A673 (cell line): ENCODE measurements at regions of chr16 and their contacts with region 1.

Region 1: GRCh38 chr16:69286941-69287713 is 24.0 kb upstream of the VPS4A start:
- DNase-seq: peak; percentile 80
- H3K4me3 ChIP-seq: no peak overlapping the region
- H3K27ac ChIP-seq: peak overlapping the region; percentile 42
- H3K4me1 ChIP-seq: peaks cover 5% of the 10 kb centered on the region
- H3K27me3 ChIP-seq: no peaks in the 10 kb centered on the region
- CTCF ChIP-seq: peak; percentile 76

Region 2: DNA sequence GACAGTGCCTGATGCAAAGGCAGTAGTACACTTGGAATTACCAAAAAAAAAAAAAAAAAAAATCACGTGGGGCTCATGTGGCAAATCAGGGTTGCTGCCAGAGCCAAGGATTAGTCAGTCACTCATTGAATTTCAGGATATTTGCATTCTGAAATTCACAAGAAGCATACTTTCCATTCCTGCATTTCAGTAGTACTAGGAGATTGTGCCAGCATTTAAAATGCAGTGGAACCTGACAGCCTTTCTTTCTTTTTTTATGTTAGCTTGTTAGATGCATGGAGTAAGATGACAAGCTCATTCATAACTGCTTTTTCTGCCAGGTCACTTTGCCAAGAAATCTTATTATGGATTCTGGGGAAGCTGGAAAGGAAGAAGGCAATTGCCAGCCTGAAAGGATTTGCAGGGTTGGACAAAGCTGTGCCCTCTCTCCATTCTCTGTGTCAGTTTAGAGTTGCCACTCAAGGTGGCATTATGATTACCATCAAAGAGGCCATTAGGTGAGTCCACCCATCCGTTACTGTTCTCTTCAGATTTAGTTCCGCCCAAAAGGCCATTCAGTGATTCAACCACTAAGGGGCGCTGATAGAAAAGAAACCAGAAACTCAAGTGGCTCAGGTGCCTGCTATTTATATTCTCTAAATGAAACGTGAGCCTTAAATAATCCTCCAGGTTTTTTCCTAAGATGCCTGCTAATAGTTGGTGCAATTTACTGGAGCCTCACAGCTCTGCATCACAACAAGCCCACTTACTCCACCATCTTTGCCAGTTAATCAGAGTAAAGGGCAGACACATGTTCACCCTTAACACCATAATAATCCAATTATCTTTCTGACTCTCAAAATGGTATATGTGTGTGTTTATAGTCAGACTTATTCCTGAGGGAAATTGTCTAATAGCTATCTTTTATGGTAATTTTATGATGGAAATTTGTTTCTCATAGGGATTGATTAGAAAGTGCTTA is 384.8 kb before region 1 on chr16:
- CTCF ChIA-PET with region 1: no interaction called
- POLR2A ChIA-PET with region 1: no interaction called
- intact Hi-C with region 1: loop called (anchors 5 kb)
- DNase-seq: peak; percentile 68
- H3K4me3 ChIP-seq: no peak overlapping the region
- H3K27ac ChIP-seq: peak overlapping the region; percentile 9
- H3K4me1 ChIP-seq: peaks cover 17% of the 10 kb centered on the region
- H3K27me3 ChIP-seq: no peaks in the 10 kb centered on the region
- CTCF ChIP-seq: peak; percentile 86

Region 3: DNA sequence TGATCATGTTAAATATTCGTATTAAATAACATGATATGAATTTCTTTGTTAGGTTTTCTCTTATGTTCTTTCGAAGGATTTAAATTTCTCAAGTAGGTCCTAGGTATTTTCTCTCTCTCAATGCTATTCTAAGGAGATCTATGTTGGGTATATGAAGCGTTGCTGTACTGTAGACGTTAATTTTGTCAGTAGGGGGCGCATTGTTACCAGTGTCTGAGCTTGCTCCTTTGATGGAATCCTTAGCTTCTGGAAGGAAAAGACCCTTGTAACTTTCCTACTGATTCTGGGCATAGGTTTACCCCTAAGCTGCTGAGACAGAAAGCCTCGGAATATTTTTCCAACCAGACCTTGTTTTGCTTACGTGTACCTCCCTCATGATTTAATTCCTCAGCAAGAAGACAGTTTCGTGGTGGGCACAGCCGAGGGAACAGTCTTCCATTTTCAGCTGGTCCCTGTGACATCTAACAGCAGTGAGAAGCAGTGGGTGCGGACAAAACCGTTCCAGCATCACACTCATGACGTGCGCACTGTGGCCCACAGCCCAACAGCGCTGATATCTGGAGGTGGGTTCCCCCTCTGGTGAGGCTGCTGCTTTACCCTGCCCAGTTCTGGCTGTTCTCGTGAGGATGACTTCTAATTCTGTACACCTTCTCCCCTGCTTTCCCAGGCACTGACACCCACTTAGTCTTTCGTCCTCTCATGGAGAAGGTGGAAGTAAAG is 136.8 kb before region 1 on chr16:
- CTCF ChIA-PET with region 1: interaction called, 8 read pairs
- POLR2A ChIA-PET with region 1: no interaction called
- intact Hi-C with region 1: loop called (anchors 1 kb)
- DNase-seq: peak; percentile 86
- H3K4me3 ChIP-seq: no peak overlapping the region
- H3K27ac ChIP-seq: no peak overlapping the region
- H3K4me1 ChIP-seq: no peaks in the 10 kb centered on the region
- H3K27me3 ChIP-seq: no peaks in the 10 kb centered on the region
- CTCF ChIP-seq: peak; percentile 85